ENCODE measurements at regions of chr14 and their contacts with region 1.

Region 1: DNA sequence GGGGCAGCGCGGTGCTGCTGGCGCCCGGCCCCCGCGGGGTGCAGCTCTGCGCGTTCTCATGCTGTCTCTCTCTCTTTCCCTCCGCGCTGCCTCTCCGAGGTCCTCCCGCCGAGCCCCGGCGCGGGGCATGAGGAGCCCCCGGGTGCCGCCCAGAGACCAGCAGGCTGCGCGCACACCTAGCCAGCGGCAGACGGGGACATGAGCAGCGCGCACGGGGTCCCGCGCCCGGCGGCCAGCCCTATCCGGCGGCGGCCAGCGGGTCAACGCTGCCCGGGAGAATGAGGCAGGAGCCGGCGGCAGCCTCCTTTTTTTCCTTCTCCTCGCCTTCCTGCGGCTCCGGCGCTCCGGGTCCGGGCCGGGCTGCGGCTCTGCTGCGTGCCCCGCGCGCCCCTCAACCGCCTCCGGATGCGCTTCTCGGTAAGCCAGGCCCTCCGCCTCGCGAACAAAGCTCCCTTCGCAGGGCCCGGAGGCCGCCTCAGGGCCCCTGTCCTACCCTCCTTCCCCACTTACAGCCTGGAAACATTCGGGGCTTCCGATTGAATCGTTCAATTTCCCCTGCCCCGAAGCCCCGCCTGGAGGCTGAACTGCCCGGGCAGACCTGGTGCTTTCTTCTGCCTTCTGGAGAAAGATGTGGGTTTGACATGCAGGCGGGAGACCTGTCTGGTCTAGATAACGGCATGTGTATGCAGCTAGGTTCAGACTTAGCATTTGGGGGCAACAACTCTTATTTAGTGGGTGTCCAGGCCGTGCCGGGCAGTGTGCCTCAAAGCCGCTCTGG is at the start of gene TUNAR:
- DNase-seq: no peak
- ATAC-seq: no peak
- H3K4me3 ChIP-seq: no peak within 1 kb of the TSS
- H3K27ac ChIP-seq: no peak within 1 kb of the TSS
- H3K4me1 ChIP-seq: peaks cover 0 to 5% of the 10 kb centered on the region in 2 experiments; a peak in 2 of 5 replicates
- H3K27me3 ChIP-seq: peaks cover 0 to 25% of the 10 kb centered on the region in 2 experiments; a peak in 2 of 5 replicates
- CTCF ChIP-seq: no peak
- EP300 ChIP-seq: no peak
- POLR2A ChIP-seq: no peak
- RAD21 ChIP-seq: no peak
- polyA plus RNA-seq, gene TUNAR: not detected

Region 2: GRCh38 chr14:95319312-95320021 is 557.5 kb before region 1 on chr14 and contains the start of gene CLMN:
- CTCF ChIA-PET with region 1: no interaction called
- POLR2A ChIA-PET with region 1: no interaction called
- in situ Hi-C with region 1: no loop called
- intact Hi-C with region 1: no loop called
- DNase-seq: peak; percentile 23 to 87 (median 78)
- ATAC-seq: peak; percentile 83
- H3K4me3 ChIP-seq: peak within 1 kb of the TSS; percentile 41
- H3K27ac ChIP-seq: no peak within 1 kb of the TSS
- H3K4me1 ChIP-seq: peaks cover 0 to 12% of the 10 kb centered on the region in 2 experiments; a peak in 2 of 5 replicates
- H3K27me3 ChIP-seq: peaks cover 0 to 37% of the 10 kb centered on the region in 2 experiments; a peak in 3 of 5 replicates
- CTCF ChIP-seq: no peak
- EP300 ChIP-seq: no peak
- POLR2A ChIP-seq: no peak
- RAD21 ChIP-seq: no peak
- polyA plus RNA-seq, gene CLMN: not detected

Region 3: DNA sequence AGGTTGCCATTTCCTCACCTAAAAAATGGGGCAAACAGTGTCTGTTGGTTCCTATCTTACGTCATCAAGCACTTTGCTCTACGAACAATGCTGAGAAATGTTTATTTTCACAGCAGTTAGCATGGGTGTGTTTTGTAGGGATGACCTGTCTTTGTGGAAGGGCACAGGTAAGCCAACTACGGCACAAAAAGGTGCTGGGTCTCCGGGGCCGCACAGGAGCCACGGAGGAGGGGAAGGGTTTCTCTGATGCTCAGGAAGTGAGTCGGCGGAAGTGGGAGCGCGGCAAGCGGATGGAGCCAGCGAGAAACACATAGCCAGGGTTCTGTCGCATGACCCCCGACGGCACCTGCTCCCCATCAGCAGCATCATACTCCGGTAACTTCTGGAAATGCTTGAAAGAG is 256.3 kb before region 1 on chr14:
- CTCF ChIA-PET with region 1: no interaction called
- POLR2A ChIA-PET with region 1: no interaction called
- in situ Hi-C with region 1: no loop called
- intact Hi-C with region 1: loop called (anchors 10 kb)
- DNase-seq: peak; percentile 21 to 34 (median 29)
- ATAC-seq: peak; percentile 86
- H3K4me3 ChIP-seq: peak overlapping the region; percentile 42
- H3K27ac ChIP-seq: no peak overlapping the region
- H3K4me1 ChIP-seq: no peaks in the 10 kb centered on the region
- H3K27me3 ChIP-seq: no peaks in the 10 kb centered on the region
- CTCF ChIP-seq: no peak
- EP300 ChIP-seq: no peak
- POLR2A ChIP-seq: no peak
- RAD21 ChIP-seq: no peak

Region 4: DNA sequence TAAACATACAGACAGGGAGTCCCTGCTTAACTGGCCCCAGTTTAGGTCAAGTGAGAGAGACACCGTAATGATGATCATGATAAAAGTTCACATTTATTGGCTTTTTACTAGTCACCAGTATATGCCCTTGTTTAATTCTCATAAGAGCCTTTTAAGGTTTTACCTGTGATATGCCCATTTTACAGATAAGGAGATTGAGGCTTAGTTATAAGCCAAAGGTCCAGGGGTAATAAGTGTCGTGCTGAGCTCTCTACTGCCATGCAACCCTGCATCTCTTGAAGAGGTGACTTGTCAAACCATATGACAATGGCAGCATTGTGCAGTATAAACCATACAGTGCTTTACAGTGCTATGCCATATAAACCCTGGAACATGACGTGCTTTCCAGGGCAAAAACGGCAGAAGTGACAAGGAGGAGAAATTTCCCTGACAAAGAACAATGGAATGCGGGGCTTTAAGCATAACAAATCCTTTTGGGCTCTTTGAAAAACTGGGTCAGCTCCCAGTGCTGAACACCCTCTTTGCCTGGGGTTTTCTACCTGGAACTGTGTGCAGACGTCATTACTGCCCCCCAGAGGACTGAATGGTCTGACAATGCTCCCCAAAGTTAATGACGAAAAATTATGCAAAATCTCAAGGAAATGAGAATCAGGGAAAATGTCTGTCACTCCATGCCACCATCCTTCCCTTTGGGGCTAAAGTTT is 102.5 kb after region 1 on chr14:
- CTCF ChIA-PET with region 1: no interaction called
- POLR2A ChIA-PET with region 1: no interaction called
- in situ Hi-C with region 1: no loop called
- intact Hi-C with region 1: loop called (anchors 5 kb)
- DNase-seq: no peak
- ATAC-seq: peak; percentile 48; the same call in 2 of the 3 replicates
- H3K4me3 ChIP-seq: no peak overlapping the region
- H3K27ac ChIP-seq: no peak overlapping the region
- H3K4me1 ChIP-seq: no peaks in the 10 kb centered on the region
- H3K27me3 ChIP-seq: no peaks in the 10 kb centered on the region
- CTCF ChIP-seq: peak in 2 of 3 experiments; percentile 29 to 32; a peak in 3 of 6 replicates
- EP300 ChIP-seq: no peak
- POLR2A ChIP-seq: no peak
- RAD21 ChIP-seq: 0 out of 4 replicates have a peak, but pooled peaks of 1 of the 2 experiments have one; percentile 9